ENCODE measurements at regions of chr11 and their contacts with region 1.

Region 1: GRCh38 chr11:86447763-86448480 is 73.2 kb downstream of the CCDC81 start:
- DNase-seq: peak; percentile 79
- H3K4me3 Mint-ChIP-seq: peak overlapping the region; percentile 48
- H3K27ac Mint-ChIP-seq: no peak overlapping the region
- H3K4me1 Mint-ChIP-seq: peaks cover 37% of the 10 kb centered on the region
- H3K27me3 Mint-ChIP-seq: no peaks in the 10 kb centered on the region

Region 2: DNA sequence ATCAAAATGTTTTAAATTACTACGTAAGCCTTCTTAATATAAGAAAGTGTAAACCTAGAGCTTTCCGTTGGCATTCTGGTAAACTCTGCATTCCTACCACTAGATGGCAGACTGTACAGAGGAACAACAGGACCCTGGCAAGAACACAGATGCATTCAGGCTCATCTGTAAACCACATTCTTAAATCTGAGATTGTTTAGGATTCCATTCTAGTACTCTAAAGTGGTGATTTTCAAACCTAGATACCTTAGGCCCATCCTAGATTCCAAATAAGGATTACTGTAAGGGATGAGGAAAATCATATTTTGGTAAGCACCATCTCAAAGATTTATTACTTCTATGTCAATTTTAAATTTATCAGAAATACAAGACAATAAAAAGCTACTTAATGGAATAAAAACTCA is 405.9 kb before region 1 on chr11:
- intact Hi-C with region 1: loop called (anchors 5 kb)
- DNase-seq: peak; percentile 88
- H3K4me3 Mint-ChIP-seq: peak overlapping the region; percentile 45
- H3K27ac Mint-ChIP-seq: peak overlapping the region; percentile 73
- H3K4me1 Mint-ChIP-seq: peaks cover 57% of the 10 kb centered on the region
- H3K27me3 Mint-ChIP-seq: no peaks in the 10 kb centered on the region

Region 3: GRCh38 chr11:86230921-86231430 is 216.9 kb before region 1 on chr11:
- intact Hi-C with region 1: loop called (anchors 5 kb)
- DNase-seq: peak; percentile 53
- H3K4me3 Mint-ChIP-seq: no peak overlapping the region
- H3K27ac Mint-ChIP-seq: peak overlapping the region; percentile 73
- H3K4me1 Mint-ChIP-seq: peaks cover 46% of the 10 kb centered on the region
- H3K27me3 Mint-ChIP-seq: peaks cover 2% of the 10 kb centered on the region

Region 4: DNA sequence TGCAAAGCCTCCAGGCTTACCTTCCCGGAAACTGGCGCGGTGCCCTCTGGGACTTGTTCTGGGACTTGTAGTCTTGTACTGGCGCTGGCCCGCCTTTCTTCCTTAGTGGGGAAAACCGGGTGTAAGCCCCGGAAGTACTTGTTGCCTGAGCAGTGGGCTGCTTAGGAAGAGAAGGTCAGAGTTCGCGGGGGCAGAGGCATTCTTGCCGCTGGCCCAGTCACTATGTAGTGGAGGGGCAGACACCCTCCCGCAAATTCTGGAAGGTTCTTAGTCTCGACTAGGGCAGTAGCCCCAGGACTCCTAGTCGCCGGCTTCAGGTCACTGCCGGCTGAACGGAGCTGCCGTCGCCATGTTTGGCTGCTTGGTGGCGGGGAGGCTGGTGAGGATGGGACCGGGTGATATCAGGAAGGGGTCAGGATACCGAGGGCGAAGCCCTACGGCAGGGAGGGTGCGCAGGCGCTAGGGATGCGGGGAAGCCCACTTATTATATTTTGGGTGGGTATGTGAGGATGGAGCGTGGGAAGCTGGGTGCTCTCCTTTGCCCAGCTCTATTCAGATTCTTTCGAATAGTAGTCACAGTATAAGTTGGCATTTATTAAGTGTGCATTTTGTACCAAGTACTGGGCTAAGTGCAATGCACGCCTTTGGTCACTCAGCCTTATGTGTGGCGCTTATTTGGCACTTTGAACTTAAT is 145.7 kb before region 1 on chr11 and contains the start of gene HIKESHI:
- intact Hi-C with region 1: loop called (anchors 2 kb)
- DNase-seq: peak; percentile 96
- H3K4me3 Mint-ChIP-seq: peak within 1 kb of the TSS; percentile 99
- H3K27ac Mint-ChIP-seq: peak within 1 kb of the TSS; percentile 98
- H3K4me1 Mint-ChIP-seq: peaks cover 19% of the 10 kb centered on the region
- H3K27me3 Mint-ChIP-seq: peaks cover 2% of the 10 kb centered on the region
- total RNA-seq, gene HIKESHI: 54.0 and 62.4 TPM in 2 replicates

Region 5: DNA sequence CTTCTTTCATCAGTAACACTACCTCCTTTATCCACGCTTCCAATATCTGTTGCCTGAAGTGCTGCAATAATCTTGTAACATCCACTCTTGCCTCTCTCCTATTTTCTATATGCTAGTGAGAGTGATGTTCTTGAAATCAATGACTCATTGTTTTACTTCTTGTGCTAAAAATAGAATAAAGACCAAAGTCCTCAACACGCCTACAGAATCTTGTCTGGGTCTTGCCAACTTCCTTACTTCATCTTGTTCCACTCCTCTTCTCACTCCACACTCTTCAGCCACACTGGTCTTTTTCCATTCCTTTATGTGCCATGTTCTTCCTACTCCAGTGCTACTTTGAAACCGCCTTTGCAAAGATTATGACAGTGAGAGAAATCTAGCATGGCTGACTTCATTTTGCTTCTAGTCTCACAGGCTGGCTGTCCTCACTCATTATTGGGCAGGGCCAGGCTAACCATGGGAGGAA is 63.2 kb after region 1 on chr11:
- intact Hi-C with region 1: loop called (anchors 2 kb)
- DNase-seq: no peak
- H3K4me3 Mint-ChIP-seq: no peak overlapping the region
- H3K27ac Mint-ChIP-seq: no peak overlapping the region
- H3K4me1 Mint-ChIP-seq: no peaks in the 10 kb centered on the region
- H3K27me3 Mint-ChIP-seq: peaks cover under 1% of the 10 kb centered on the region